Caco-2 (cell line): ENCODE measurements at regions of chr18 and their contacts with region 1.

Region 1: GRCh38 chr18:50878345-50879301 is at the start of gene ME2:
- DNase-seq: peak; percentile 82 to 89
- H3K4me3 ChIP-seq: peak within 1 kb of the TSS; percentile 72
- H3K4me3 Mint-ChIP-seq: peak within 1 kb of the TSS; percentile 95
- H3K27ac Mint-ChIP-seq: peak within 1 kb of the TSS; percentile 69
- H3K4me1 ChIP-seq: no peaks in the 10 kb centered on the region
- H3K4me1 Mint-ChIP-seq: no peaks in the 10 kb centered on the region
- H3K27me3 ChIP-seq: no peaks in the 10 kb centered on the region
- H3K27me3 Mint-ChIP-seq: no peaks in the 10 kb centered on the region
- CTCF ChIP-seq: no peak
- total RNA-seq, gene ME2: 15.7 and 16.5 TPM in 2 replicates

Region 2: DNA sequence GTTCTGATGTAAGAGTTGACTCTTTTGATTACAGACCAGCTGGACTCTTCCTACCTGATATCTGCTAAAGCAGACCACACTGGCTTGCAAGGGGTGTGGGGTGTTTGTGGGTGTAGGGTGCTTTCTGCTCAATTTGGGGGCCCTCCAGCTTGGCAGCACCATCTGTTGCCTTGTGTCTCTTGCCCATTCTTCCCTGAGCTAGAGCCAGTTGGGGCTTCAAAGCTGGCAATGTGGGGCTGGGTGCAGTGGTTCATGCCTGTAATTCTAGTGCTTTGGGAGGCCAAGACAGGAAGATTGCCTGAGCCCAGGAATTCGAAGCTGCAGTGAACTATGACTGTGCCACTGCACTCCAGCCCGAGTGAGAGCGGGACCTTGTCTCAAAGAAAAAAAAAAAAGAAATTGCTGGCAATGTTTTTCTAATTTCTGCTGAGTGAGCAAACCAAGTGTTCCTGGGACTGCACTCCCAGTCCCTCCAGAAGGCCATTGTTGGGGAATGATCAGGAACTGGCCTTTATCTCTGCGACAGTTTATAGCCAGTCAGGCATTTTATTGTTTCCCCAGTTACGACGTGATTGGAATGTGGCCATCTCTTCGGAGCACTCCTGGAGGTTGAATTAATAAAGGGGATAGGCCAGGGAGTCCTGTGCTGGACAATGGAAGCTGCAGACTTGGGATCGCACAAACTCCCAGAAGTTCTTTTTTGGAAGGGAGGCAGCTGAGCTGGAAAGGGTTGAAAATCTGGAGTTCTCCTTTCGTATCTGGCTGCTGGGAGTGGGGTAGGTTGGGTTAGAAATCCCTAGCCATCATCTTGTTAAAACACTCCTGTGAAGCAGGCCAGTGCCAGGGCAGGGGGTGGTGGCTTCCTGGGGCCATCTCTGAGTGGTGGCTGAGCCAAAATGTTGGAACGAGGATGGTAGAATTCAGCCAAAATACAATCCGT is 1259.6 kb before region 1 on chr18:
- CTCF ChIA-PET with region 1: no interaction called
- POLR2A ChIA-PET with region 1: no interaction called
- intact Hi-C with region 1: no loop called
- DNase-seq: no peak
- H3K4me3 ChIP-seq: no peak overlapping the region
- H3K4me3 Mint-ChIP-seq: no peak overlapping the region
- H3K27ac Mint-ChIP-seq: no peak overlapping the region
- H3K4me1 ChIP-seq: no peaks in the 10 kb centered on the region
- H3K4me1 Mint-ChIP-seq: peaks cover 14% of the 10 kb centered on the region
- H3K27me3 ChIP-seq: no peaks in the 10 kb centered on the region
- H3K27me3 Mint-ChIP-seq: no peaks in the 10 kb centered on the region
- CTCF ChIP-seq: no peak

Region 3: DNA sequence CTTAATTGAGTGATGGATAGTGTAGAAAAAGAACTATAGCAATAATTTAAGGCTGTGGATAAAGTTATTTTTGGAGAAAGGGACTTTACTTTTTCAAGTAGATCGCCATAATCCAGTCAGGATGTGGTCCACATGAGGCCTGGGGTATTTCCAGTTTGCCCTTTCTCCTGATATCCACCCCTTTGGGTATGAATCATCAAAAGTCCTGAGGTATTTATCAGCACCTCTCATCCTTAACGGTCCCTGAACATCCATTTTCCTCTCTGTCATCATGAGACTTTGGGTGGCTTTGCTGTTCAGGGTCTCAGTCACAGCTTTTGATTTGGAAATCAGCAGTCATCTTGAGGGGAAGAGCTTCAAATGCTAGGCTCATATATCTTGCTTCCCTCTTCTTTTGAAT is 49.9 kb after region 1 on chr18:
- CTCF ChIA-PET with region 1: no interaction called
- POLR2A ChIA-PET with region 1: no interaction called
- intact Hi-C with region 1: loop called (anchors 2 kb)
- DNase-seq: no peak
- H3K4me3 ChIP-seq: no peak overlapping the region
- H3K4me3 Mint-ChIP-seq: no peak overlapping the region
- H3K27ac Mint-ChIP-seq: no peak overlapping the region
- H3K4me1 ChIP-seq: no peaks in the 10 kb centered on the region
- H3K4me1 Mint-ChIP-seq: no peaks in the 10 kb centered on the region
- H3K27me3 ChIP-seq: no peaks in the 10 kb centered on the region
- H3K27me3 Mint-ChIP-seq: no peaks in the 10 kb centered on the region
- CTCF ChIP-seq: no peak

Region 4: GRCh38 chr18:51290860-51291259 is 412.2 kb after region 1 on chr18:
- CTCF ChIA-PET with region 1: no interaction called
- POLR2A ChIA-PET with region 1: no interaction called
- intact Hi-C with region 1: no loop called
- DNase-seq: no peak
- H3K4me3 ChIP-seq: no peak overlapping the region
- H3K4me3 Mint-ChIP-seq: no peak overlapping the region
- H3K27ac Mint-ChIP-seq: no peak overlapping the region
- H3K4me1 ChIP-seq: no peaks in the 10 kb centered on the region
- H3K4me1 Mint-ChIP-seq: peaks cover 6% of the 10 kb centered on the region
- H3K27me3 ChIP-seq: no peaks in the 10 kb centered on the region
- H3K27me3 Mint-ChIP-seq: no peaks in the 10 kb centered on the region
- CTCF ChIP-seq: no peak